Activated CD4-positive, alpha-beta T cell treated with anti-CD3 and anti-CD28 coated beads for 36 hours (primary cell): ENCODE measurements at regions of chr16 and their contacts with region 1.

Region 1: DNA sequence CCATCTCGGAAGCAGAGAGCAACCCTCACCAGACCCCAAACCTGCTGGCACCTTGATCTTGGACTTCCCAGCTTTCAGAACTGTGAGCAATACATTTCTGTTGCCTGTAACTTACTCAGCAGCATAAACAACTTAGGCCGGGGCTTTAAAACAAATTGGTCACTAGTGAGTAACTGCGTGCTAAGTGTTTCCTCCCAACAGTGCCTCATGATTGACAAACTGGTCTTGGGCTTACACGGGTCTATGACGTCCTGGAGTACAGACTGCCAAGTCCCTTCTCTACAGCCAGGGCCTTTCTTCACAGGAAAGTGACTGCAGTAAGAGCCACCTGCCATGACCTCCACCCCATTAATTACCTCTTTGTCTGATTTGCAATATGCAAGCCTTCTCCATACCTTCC is 136.7 kb downstream of the XYLT1 start:
- DNase-seq: no peak
- ATAC-seq: no peak
- H3K4me3 Mint-ChIP-seq: no peak overlapping the region
- H3K27ac Mint-ChIP-seq: no peak overlapping the region
- H3K4me1 Mint-ChIP-seq: peaks cover 2% of the 10 kb centered on the region
- H3K27me3 Mint-ChIP-seq: no peaks in the 10 kb centered on the region

Region 2: DNA sequence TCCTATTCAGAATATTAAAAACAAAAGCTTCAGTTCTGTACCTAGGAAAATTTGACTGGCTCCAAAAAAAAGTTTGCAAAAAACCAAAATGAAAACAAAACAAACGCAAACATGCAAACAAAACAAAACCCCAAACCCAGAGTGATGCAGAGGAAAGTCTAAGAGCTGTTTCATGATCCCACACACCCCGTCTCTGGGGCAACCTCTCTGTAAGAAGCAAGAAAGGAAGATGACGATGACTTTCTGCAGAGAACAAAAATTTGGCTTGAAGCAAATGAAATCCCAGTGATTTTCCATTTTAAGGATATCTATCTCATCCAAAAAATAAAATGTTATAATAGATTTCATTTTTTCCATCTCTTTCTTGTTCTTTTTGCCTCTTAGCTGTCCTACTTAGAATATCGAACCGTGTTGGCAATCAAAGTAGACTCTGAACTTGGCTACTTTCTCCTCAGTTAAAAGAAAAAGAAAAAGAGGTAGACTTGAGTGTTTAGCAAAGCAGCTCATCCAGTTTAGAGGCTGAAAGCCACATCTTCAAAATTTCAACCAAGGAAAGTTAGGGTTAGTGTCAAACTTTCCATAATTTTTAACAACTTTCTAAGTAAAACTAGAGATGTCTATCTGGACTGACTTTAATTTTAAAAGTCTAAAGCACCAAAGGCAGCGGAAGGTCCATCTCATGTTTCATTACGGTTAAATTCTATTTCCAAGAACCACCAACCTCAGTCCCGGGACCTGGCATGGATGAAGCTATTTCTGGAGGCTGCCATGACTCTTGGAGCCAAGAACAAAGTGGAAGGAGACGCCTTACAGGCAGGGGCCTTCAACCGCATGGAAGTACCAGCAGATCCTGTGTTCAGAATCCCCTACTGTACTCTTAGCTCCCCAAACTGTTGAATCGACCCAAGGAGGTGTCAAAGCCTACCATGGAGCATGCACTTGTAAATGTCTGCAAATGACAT is 44.1 kb before region 1 on chr16:
- CTCF ChIA-PET with region 1: no interaction called
- POLR2A ChIA-PET with region 1: no interaction called
- intact Hi-C with region 1: loop called in 1 of 2 experiments (anchors 5 kb)
- DNase-seq: no peak
- ATAC-seq: no peak
- H3K4me3 Mint-ChIP-seq: no peak overlapping the region
- H3K27ac Mint-ChIP-seq: peak overlapping the region; percentile 6
- H3K4me1 Mint-ChIP-seq: peaks cover 7% of the 10 kb centered on the region
- H3K27me3 Mint-ChIP-seq: no peaks in the 10 kb centered on the region

Region 3: DNA sequence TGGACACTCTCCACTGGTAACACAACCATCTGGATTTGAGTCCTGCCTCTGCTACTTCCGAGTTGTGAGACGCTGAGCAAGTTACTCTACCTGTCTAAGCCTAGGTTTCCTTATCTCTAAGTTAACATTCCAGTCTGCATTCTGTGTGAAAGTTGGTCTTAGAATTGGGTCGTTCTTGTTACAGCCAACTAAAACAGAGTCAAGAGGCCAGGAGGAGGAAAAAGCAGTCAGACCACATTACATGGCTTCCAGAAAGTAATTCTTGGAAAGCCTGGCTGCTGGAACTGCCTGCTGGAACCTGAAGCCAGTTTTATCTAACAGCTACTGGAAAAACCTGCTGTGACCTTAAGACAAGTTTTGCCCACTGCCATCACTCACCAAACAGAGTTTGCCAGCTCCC is 175.1 kb after region 1 on chr16:
- CTCF ChIA-PET with region 1: no interaction called
- POLR2A ChIA-PET with region 1: no interaction called
- intact Hi-C with region 1: no loop called
- DNase-seq: no peak
- ATAC-seq: no peak
- H3K4me3 Mint-ChIP-seq: no peak overlapping the region
- H3K27ac Mint-ChIP-seq: no peak overlapping the region
- H3K4me1 Mint-ChIP-seq: no peaks in the 10 kb centered on the region
- H3K27me3 Mint-ChIP-seq: peaks cover 8% of the 10 kb centered on the region